Activated CD8-positive, alpha-beta T cell treated with anti-CD3 and anti-CD28 coated beads for 36 hours (primary cell): ENCODE measurements at regions of chr11 and their contacts with region 1.

Region 1: DNA sequence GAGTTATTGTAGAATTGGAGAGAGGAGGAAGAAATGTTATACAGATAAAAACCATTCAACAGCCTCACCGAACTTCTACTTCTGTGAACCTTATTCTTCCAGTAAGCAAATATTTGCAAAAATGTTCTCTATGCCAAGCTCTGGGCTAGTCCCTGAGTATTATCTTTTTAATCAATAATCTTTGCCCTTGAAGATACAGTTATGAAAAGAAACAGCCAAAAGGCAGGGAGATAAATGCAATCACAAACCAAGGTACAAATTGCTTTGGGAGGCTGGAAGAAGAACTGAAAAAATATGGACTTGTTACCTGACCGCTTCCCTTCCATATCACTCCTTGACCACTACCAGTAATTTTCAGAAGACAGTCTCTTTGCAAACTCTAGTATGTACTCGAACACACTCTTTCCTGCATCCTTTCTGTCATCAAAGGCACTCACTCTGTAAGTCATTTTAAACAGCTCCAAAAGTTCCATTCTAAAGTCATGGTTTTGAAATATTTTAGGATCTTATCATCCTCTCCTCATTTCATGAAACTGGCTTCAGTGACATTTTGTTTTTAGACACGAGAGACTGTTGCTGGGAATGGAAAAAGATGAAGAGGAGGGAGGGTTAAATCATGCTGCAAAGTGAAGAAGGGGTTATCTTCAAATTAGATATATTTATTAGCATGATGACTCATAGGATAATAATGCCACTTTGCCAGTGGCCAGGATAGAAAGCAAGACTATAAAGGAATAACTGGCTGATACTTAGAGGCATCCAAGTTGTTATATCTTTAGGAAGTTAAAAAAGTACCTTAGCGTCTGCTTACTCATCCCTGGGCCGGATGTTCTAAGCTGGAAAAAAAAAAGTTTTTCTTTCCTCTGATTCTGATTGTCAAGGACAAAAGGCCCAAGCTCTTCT is 549.2 kb downstream of the METTL15 start:
- DNase-seq: no peak
- ATAC-seq: no peak
- H3K4me3 Mint-ChIP-seq: no peak overlapping the region
- H3K27ac Mint-ChIP-seq: no peak overlapping the region
- H3K4me1 Mint-ChIP-seq: no peaks in the 10 kb centered on the region
- H3K27me3 Mint-ChIP-seq: no peaks in the 10 kb centered on the region
- CTCF ChIP-seq: no peak

Region 2: DNA sequence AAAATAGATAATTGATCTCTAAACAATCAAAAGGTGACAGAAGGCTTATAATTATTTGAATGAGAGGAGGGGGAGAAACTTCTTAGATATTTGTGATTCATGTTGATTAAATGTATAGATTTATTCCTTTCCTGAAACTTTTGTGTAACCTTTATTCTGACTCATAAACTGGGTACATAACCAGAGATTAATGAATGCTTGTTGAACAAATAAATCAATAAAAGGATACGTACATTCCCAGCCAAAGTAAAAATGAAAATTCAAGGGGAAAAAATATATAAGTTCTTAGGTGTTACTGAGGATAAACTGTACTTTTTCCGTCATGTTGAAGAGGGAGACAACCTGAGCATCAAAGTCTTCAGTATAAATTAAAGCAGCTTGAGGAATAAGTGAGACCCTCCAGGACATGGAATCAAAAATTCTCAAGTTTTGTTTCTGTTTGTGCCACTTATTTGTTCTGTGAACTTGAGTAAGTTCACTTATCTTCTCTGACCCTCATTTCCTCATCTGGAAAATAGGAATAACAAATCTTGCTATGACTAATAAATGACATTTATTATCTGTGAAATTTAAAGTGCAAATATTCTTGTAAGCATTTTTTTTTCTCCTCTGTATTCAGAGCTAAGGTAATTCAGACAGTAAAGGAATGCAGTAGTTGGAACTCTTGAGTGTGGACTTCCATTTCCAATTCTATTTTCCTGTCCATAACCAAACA is 353.7 kb before region 1 on chr11:
- CTCF ChIA-PET with region 1: no interaction called
- POLR2A ChIA-PET with region 1: no interaction called
- intact Hi-C with region 1: no loop called
- DNase-seq: no peak
- ATAC-seq: no peak
- H3K4me3 Mint-ChIP-seq: no peak overlapping the region
- H3K27ac Mint-ChIP-seq: no peak overlapping the region
- H3K4me1 Mint-ChIP-seq: no peaks in the 10 kb centered on the region
- H3K27me3 Mint-ChIP-seq: no peaks in the 10 kb centered on the region
- CTCF ChIP-seq: no peak

Region 3: DNA sequence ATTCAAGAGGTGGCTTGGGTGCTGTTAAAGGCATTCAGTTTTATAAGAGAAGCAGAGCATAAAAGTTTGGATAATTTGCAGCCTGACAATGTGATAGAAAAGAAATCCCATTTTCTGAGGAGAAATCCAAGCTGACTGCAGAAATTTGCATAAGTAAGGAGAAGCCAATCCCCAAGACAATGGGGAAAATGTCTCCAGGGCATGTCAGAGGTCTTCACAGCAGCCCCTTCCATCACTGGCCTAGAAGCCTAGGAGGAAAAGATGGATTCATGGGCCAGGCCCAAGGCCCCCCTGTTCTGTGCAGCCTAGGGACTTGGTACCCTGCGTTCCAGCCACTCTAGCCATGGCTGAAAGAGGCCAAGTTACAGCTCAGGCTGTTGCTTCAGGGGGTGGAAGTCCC is 341.9 kb before region 1 on chr11:
- CTCF ChIA-PET with region 1: no interaction called
- POLR2A ChIA-PET with region 1: no interaction called
- intact Hi-C with region 1: no loop called
- DNase-seq: no peak
- ATAC-seq: no peak
- H3K4me3 Mint-ChIP-seq: no peak overlapping the region
- H3K27ac Mint-ChIP-seq: no peak overlapping the region
- H3K4me1 Mint-ChIP-seq: no peaks in the 10 kb centered on the region
- H3K27me3 Mint-ChIP-seq: no peaks in the 10 kb centered on the region
- CTCF ChIP-seq: no peak

Region 4: GRCh38 chr11:28596816-28597215 is 60.6 kb before region 1 on chr11:
- CTCF ChIA-PET with region 1: no interaction called
- POLR2A ChIA-PET with region 1: no interaction called
- intact Hi-C with region 1: loop called (anchors 10 kb)
- DNase-seq: no peak
- ATAC-seq: no peak
- H3K4me3 Mint-ChIP-seq: no peak overlapping the region
- H3K27ac Mint-ChIP-seq: no peak overlapping the region
- H3K4me1 Mint-ChIP-seq: no peaks in the 10 kb centered on the region
- H3K27me3 Mint-ChIP-seq: no peaks in the 10 kb centered on the region
- CTCF ChIP-seq: no peak

Region 5: DNA sequence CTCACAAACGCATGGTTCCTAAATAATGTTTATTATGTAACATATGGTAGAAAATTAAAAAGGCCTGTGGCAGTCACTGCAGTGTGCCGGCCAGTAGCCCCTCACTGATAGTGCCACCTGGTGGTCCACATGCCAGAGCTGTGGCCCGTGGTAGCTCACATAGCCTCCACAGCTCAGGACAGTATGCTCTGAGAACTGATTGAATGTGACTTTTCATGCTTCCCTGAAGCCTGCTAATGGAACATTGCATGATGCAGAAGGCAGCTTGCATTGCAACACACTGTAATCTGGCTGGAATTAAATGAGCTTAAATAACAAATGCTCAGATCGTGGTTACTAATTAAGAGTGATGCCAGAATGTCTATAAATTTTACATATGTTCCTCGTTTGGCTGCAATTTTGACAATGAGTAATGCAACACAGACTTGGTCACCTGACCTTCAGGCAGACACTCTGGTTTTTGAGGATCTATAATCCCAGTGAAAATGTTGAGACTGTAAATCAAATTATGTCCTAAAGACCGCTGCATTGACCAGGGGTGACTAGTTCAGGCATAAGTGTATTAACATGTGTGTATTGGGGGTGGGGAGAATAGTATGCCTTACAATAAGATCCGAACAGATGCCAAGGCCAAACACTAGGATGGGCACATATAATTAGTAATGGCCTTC is 17.2 kb after region 1 on chr11:
- CTCF ChIA-PET with region 1: no interaction called
- POLR2A ChIA-PET with region 1: no interaction called
- intact Hi-C with region 1: no loop called
- DNase-seq: peak; percentile 1
- ATAC-seq: no peak
- H3K4me3 Mint-ChIP-seq: no peak overlapping the region
- H3K27ac Mint-ChIP-seq: no peak overlapping the region
- H3K4me1 Mint-ChIP-seq: no peaks in the 10 kb centered on the region
- H3K27me3 Mint-ChIP-seq: no peaks in the 10 kb centered on the region
- CTCF ChIP-seq: peak; percentile 6